ENCODE measurements at regions of chr1 and their contacts with region 1.

Region 1: GRCh38 chr1:84753516-84754385 is 63.5 kb upstream of the SSX2IP start:
- DNase-seq: peak; percentile 69 to 91 (median 84)
- H3K4me3 ChIP-seq: no peak overlapping the region
- H3K27ac ChIP-seq: peak overlapping the region in 55 of 59 donors; percentile 0 to 83 (median 58)
- H3K27me3 ChIP-seq: no peaks in the 10 kb centered on the region
- CTCF ChIP-seq: peak; percentile 89 to 100 (median 97)

Region 2: GRCh38 chr1:84133479-84133878 is 620.3 kb before region 1 on chr1:
- intact Hi-C with region 1: loop called in 1 of 2 experiments (anchors 10 kb)
- DNase-seq: peak in 1 of 10 donors; percentile 7
- H3K4me3 ChIP-seq: no peak overlapping the region
- H3K27ac ChIP-seq: no peak overlapping the region
- H3K27me3 ChIP-seq: no peaks in the 10 kb centered on the region
- CTCF ChIP-seq: no peak

Region 3: GRCh38 chr1:84298328-84298683 is 455.4 kb before region 1 on chr1:
- intact Hi-C with region 1: loop called in 1 of 2 experiments (anchors 10 kb)
- DNase-seq: peak; percentile 56 to 85 (median 64)
- H3K4me3 ChIP-seq: peak overlapping the region; percentile 62 to 96 (median 82)
- H3K27ac ChIP-seq: peak overlapping the region; percentile 75 to 98 (median 95)
- H3K27me3 ChIP-seq: peaks cover 0 to 3% (median 0%) of the 10 kb centered on the region in 45 donors
- CTCF ChIP-seq: peak in 17 of 56 donors; percentile 4 to 45 (median 19)

Region 4: GRCh38 chr1:84442256-84442655 is 311.5 kb before region 1 on chr1:
- intact Hi-C with region 1: loop called (anchors 2 to 5 kb)
- DNase-seq: no peak
- H3K4me3 ChIP-seq: no peak overlapping the region
- H3K27ac ChIP-seq: no peak overlapping the region
- H3K27me3 ChIP-seq: no peaks in the 10 kb centered on the region
- CTCF ChIP-seq: peak; percentile 26 to 74 (median 56)

Region 5: DNA sequence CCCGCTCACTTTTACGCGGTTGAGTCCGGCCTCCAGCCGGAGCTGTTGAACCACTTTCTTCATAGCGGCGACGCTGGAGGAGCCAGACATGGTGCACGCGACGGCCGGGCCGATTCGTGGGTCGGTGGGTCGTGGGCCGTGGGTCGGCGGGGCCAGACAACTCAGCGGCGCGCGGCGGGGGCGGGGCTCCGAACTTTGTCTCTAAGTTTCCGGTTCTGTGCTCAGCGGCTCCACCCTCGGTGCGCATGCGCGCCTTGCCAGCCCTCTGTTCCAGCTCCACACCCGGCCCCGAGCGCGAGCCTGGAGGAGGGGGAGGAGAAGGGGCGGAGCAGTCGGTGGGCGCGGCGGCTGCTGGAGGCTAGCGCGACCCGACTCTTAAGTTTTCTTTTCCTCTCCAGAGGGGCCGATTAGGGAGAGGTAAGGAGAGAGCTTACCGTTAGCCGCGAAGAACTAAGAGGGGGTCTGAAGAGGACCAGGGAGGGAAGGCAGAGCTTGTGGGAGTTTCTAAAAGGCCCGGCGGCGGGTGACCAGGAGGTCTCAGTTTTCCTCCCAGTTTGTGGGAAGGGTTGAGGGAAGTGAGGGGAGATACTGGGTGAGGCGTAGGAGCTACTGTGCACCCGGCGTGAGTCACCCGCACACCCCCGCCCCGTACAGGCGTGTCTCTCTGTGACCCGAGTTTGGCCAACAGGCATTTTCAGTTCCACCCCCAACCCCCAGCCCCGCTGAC is 247.6 kb before region 1 on chr1 and contains the starts of genes GNG5 and SPATA1:
- intact Hi-C with region 1: loop called (anchors 10 kb)
- DNase-seq: peak; percentile 88 to 97 (median 94)
- H3K4me3 ChIP-seq: peak within 1 kb of the TSS; percentile 68 to 94 (median 84)
- H3K27ac ChIP-seq: peak within 1 kb of the TSS; percentile 10 to 97 (median 87)
- H3K27me3 ChIP-seq: no peaks in the 10 kb centered on the region
- CTCF ChIP-seq: peak in 24 of 56 donors; percentile 4 to 50 (median 18)
- total RNA-seq, gene GNG5: 8.0 to 50.7 (median 21.2) TPM
- total RNA-seq, gene SPATA1: 0.20 to 5.9 (median 1.9) TPM in 113 of 120 experiments, not detected in the others

Region 6: GRCh38 chr1:84620720-84621313 is 132.9 kb before region 1 on chr1:
- intact Hi-C with region 1: loop called (anchors 2 to 5 kb)
- DNase-seq: peak; percentile 50 to 90 (median 64)
- H3K4me3 ChIP-seq: peak overlapping the region; percentile 47 to 93 (median 74)
- H3K27ac ChIP-seq: peak overlapping the region in 57 of 59 donors; percentile 23 to 94 (median 87)
- H3K27me3 ChIP-seq: no peaks in the 10 kb centered on the region
- CTCF ChIP-seq: peak in 55 of 56 donors; percentile 86 to 100 (median 98)

Region 7: DNA sequence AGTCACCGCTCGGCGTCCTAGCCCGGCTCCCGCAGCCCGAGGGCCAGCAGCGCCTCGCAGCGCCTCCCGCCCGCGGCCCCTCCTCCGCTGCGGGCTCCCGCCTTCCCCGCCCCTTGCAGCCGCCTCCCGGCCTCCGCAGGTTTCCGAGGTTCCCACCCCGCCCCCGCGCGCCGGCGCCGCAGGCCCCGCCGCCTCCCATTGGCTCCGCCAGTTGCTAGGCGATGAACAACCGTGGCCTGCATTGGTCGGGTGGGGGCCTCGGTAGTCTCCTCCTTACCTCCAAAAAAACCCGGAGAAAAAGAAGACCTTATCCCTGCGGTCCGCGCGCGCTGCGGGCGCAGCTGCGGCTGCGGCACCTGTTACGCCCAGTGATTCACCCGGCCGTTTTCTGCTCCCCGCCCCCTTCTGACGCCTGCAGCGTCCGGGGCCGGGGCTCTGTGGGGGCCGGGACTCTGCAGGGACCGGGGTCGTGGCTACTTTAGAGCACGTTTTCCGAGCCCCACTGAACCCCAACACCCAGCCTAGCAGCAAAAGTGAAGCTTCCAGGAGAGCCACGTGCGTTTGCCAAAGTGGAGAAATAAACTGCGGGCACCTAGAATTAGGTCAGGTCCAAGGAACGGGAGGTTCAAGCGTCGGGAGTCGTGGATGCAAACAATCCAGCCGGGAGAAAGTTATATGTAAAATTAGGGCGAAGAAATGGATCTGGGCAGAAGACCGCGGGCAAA is 63.2 kb before region 1 on chr1 and contains the start of gene SSX2IP:
- intact Hi-C with region 1: loop called (anchors 5 to 10 kb)
- DNase-seq: peak; percentile 92 to 98 (median 96)
- H3K4me3 ChIP-seq: peak within 1 kb of the TSS; percentile 65 to 95 (median 81)
- H3K27ac ChIP-seq: peak within 1 kb of the TSS; percentile 71 to 98 (median 92)
- H3K27me3 ChIP-seq: no peaks in the 10 kb centered on the region
- CTCF ChIP-seq: peak in 3 of 56 donors; percentile 8 to 13 (median 10)
- total RNA-seq, gene SSX2IP: 27.5 to 131 (median 86.0) TPM

Region 8: GRCh38 chr1:84959294-84959693 is 205.5 kb after region 1 on chr1:
- intact Hi-C with region 1: no loop called
- DNase-seq: no peak
- H3K4me3 ChIP-seq: no peak overlapping the region
- H3K27ac ChIP-seq: no peak overlapping the region
- H3K27me3 ChIP-seq: no peaks in the 10 kb centered on the region
- CTCF ChIP-seq: no peak

Measured in dorsolateral prefrontal cortex (tissue), 120 donors.